Activated B cell treated with CpG ODN at 0.5 μM for 24 hours (primary cell): ENCODE measurements at regions of chr2 and their contacts with region 1.

Region 1: DNA sequence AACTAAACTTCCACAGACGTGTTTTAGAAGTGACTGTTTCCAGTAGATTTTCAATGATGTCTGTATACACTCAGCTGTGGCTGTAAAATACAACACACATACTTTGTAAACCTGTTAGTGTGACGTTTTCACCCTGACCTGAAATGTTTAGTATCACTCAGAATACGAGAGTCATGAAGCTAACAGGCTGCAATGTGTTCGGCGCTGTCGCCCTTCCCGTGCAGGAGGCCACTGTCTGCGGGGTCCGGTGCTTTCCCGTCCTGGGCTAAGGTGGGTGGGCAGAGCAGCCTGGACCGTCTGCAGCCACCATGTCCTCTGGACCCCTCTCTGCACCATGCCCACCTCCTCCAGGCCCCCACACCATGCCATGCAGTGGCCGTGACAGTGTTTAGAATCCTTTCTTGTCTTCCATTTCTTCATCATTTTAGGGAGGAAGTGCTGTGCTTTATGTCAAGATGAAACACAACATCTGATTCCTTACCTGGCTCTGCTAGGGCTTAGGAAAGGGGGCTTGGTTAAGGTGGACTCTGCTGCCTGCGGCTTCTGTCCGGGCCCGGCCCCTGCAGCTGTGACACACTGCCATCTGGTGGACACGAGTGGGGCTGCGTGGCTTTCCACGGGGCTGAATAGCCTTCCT is 53.8 kb upstream of the RBM44 start:
- DNase-seq: peak; percentile 76
- ATAC-seq: peak; percentile 92
- H3K4me3 Mint-ChIP-seq: no peak overlapping the region
- H3K27ac Mint-ChIP-seq: peak overlapping the region; percentile 12
- H3K4me1 Mint-ChIP-seq: peaks cover 36% of the 10 kb centered on the region
- H3K27me3 Mint-ChIP-seq: no peaks in the 10 kb centered on the region
- CTCF ChIP-seq: peak; percentile 98

Region 2: DNA sequence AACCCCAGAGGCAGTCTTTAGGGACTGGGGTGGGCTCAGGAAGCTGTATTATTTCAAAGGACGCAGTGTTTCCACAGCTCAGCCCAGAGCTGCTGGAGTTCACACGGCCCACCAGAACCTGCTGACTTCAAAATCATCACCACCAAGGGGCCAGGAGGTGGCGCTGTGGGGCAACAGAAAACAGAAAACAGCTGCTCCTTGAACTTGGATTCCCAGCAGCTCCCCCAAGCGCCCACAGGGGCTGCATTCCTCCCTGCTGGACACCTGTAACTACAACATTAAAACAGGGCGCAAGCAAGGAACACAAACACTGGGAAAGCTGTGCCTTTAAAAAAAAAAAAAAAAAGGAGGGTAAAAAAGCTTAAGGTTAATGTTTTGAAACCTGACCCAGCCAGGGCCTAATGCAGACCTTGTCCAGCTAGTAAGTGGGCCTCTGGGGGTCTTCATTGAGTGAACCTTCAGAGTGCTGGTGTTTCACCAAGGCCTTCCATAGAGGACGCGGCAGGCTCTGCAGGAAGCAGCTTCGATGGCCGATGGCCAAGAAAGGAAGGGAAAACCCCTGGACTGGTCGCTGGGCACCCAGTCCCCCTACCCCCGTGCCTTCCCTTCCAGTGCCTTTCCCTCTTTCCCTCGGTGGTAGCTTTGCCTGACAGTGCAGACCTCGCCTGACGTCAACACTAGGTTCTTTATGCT is 231.8 kb before region 1 on chr2:
- CTCF ChIA-PET with region 1: interaction called, 54 read pairs
- POLR2A ChIA-PET with region 1: no interaction called
- intact Hi-C with region 1: loop called (anchors 1 kb)
- DNase-seq: peak; percentile 58
- ATAC-seq: peak; percentile 64
- H3K4me3 Mint-ChIP-seq: no peak overlapping the region
- H3K27ac Mint-ChIP-seq: no peak overlapping the region
- H3K4me1 Mint-ChIP-seq: no peaks in the 10 kb centered on the region
- H3K27me3 Mint-ChIP-seq: peaks cover 5% of the 10 kb centered on the region
- CTCF ChIP-seq: no peak

Region 3: GRCh38 chr2:237581751-237582746 is 162.7 kb before region 1 on chr2:
- CTCF ChIA-PET with region 1: interaction called, 12 read pairs
- POLR2A ChIA-PET with region 1: no interaction called
- intact Hi-C with region 1: loop called (anchors 1 kb)
- DNase-seq: no peak
- ATAC-seq: peak; percentile 49
- H3K4me3 Mint-ChIP-seq: no peak overlapping the region
- H3K27ac Mint-ChIP-seq: no peak overlapping the region
- H3K4me1 Mint-ChIP-seq: peaks cover 2% of the 10 kb centered on the region
- H3K27me3 Mint-ChIP-seq: peaks cover 10% of the 10 kb centered on the region
- CTCF ChIP-seq: no peak

Region 4: GRCh38 chr2:237686659-237687136 is 58.0 kb before region 1 on chr2:
- CTCF ChIA-PET with region 1: interaction called, 10 read pairs
- POLR2A ChIA-PET with region 1: interaction called, 3 read pairs
- intact Hi-C with region 1: no loop called
- DNase-seq: no peak
- ATAC-seq: no peak
- H3K4me3 Mint-ChIP-seq: no peak overlapping the region
- H3K27ac Mint-ChIP-seq: peak overlapping the region; percentile 96
- H3K4me1 Mint-ChIP-seq: peaks cover 53% of the 10 kb centered on the region
- H3K27me3 Mint-ChIP-seq: no peaks in the 10 kb centered on the region
- CTCF ChIP-seq: no peak

Region 5: DNA sequence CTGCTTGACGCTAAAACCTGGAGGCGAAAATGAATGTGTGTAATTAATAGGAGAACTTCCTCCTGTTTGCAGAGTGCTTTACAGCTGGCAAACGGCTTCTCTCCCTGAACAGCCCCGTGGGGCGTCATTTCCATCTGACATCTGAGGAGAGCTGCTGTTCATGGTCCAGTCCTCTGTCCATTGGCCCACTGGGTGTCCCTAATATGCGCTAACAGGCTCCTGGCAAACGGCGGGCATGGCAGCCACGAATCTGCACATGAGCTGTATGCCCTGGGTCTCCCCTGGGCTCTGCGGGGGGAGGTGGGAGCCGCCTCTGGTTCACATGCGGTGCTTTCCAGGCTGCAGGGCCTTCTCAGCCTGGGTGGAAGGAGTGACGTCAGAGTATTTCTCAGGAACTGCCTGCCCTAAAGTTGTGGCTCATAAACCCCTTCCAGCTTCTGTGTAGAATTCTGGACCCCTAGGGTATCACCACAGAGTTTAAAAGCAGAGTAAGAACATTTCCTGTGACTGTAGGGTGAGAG is 44.2 kb before region 1 on chr2:
- CTCF ChIA-PET with region 1: interaction called, 17 read pairs
- POLR2A ChIA-PET with region 1: no interaction called
- intact Hi-C with region 1: no loop called
- DNase-seq: peak; percentile 59
- ATAC-seq: peak; percentile 61
- H3K4me3 Mint-ChIP-seq: peak overlapping the region; percentile 62
- H3K27ac Mint-ChIP-seq: peak overlapping the region; percentile 82
- H3K4me1 Mint-ChIP-seq: peaks cover 96% of the 10 kb centered on the region
- H3K27me3 Mint-ChIP-seq: no peaks in the 10 kb centered on the region
- CTCF ChIP-seq: no peak

Region 6: DNA sequence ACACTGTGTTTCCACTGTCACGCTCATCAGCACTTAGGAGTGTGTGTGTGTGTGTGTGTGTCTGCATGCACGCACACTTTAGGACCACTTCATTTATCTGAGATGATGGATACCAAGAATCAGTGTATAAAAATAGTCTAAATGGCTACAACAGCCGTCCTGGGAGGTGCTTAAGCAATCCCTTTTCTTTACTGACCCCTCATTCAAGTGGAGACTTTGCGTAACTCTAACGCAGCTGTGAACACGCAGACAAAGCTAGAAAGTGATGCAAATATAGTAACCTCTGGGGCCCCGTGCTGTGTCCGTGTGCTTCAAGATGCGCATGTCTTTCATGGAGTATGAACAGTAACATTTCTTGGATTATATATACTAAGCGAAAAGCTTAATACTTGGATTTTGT is 13.5 kb after region 1 on chr2:
- CTCF ChIA-PET with region 1: interaction called, 13 read pairs
- POLR2A ChIA-PET with region 1: no interaction called
- intact Hi-C with region 1: no loop called
- DNase-seq: no peak
- ATAC-seq: no peak
- H3K4me3 Mint-ChIP-seq: no peak overlapping the region
- H3K27ac Mint-ChIP-seq: no peak overlapping the region
- H3K4me1 Mint-ChIP-seq: peaks cover 2% of the 10 kb centered on the region
- H3K27me3 Mint-ChIP-seq: no peaks in the 10 kb centered on the region
- CTCF ChIP-seq: no peak